GM23248 (cell line): ENCODE measurements at regions of chr3 and their contacts with region 1.

Region 1: GRCh38 chr3:36729204-36730056 is 34.9 kb downstream of the DCLK3 start:
- DNase-seq: peak; percentile 67
- H3K4me3 ChIP-seq: no peak overlapping the region
- H3K27ac ChIP-seq: no peak overlapping the region
- H3K4me1 ChIP-seq: 0 out of 2 replicates have a peak, but pooled peaks cover 3% of the 10 kb centered on the region
- H3K27me3 ChIP-seq: peaks cover 5% of the 10 kb centered on the region; the same call in 1 of the 2 replicates

Region 2: GRCh38 chr3:36868614-36869436 is 139.4 kb after region 1 on chr3:
- in situ Hi-C with region 1: loop called (anchors 10 kb)
- DNase-seq: peak; percentile 67
- H3K4me3 ChIP-seq: no peak overlapping the region
- H3K27ac ChIP-seq: no peak overlapping the region
- H3K4me1 ChIP-seq: no peaks in the 10 kb centered on the region
- H3K27me3 ChIP-seq: no peaks in the 10 kb centered on the region

Region 3: GRCh38 chr3:36969540-36970432 is 240.4 kb after region 1 on chr3:
- in situ Hi-C with region 1: loop called (anchors 10 kb)
- DNase-seq: peak; percentile 65
- H3K4me3 ChIP-seq: no peak overlapping the region
- H3K27ac ChIP-seq: no peak overlapping the region
- H3K4me1 ChIP-seq: 0 out of 2 replicates have a peak, but pooled peaks cover 8% of the 10 kb centered on the region
- H3K27me3 ChIP-seq: no peaks in the 10 kb centered on the region